Calu3 (cell line): ENCODE measurements at regions of chr22 and their contacts with region 1.

Region 1: DNA sequence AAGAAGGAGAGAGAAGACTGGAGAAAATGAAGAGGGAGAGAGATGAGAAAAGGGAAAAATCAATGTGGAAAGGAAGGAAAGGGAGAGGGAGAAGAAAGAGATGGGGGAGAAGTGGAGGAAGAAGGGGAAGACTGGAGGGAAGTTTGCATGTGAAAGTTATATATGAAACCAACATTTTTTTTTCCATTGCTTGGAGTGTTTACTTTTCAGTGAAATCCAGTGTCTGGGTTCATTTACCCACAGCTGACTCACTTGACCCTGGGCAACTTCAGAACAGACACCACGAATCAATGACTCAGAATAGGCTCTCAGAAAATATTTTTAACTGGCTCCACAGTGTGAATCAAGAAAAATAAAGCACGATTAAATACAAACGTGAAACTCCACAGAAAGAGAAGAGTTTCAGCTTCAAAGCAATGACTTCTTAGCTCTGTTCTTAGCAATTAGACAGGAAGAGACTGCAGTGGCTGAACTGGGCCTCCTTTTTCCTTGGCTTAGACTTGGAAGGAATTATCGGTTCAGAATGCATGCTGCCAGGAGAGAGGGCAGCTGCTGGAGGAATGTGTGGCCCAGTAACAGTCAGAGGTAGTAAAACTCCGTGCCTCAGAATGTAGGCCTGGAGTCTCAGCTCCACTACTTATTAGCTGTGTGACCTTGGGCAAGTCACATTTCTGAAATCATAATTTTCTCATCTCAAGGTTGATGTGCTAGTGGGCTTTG is 237.5 kb downstream of the MIAT start:
- DNase-seq: peak; percentile 44
- H3K4me3 Mint-ChIP-seq: peak overlapping the region; percentile 13
- H3K27ac Mint-ChIP-seq: peak overlapping the region; percentile 55
- H3K4me1 Mint-ChIP-seq: peaks cover 45% of the 10 kb centered on the region
- H3K27me3 Mint-ChIP-seq: peaks cover 17% of the 10 kb centered on the region
- CTCF ChIP-seq: no peak

Region 2: DNA sequence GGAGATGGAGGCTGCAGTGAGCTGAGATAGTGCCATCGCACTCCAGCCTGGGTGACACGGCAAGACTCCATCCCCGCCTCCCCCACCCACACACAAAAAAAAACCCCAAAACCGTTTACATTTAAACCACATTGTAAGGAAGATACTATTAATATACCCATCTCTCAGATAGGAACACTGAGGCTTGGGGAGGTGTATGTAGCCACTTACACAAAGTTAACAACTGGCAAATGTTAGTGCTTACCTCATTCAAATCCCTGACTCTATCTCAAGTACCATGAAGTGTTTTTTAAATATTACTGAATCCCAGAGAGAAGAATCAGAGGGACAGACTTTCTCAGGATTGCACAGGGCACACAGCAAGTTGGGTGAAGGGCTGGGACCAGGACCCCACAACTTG is 73.1 kb before region 1 on chr22:
- CTCF ChIA-PET with region 1: no interaction called
- intact Hi-C with region 1: loop called (anchors 2 kb)
- DNase-seq: no peak
- H3K4me3 Mint-ChIP-seq: no peak overlapping the region
- H3K27ac Mint-ChIP-seq: no peak overlapping the region
- H3K4me1 Mint-ChIP-seq: no peaks in the 10 kb centered on the region
- H3K27me3 Mint-ChIP-seq: peaks cover 35% of the 10 kb centered on the region
- CTCF ChIP-seq: no peak

Region 3: GRCh38 chr22:26949193-26949592 is 54.3 kb after region 1 on chr22:
- CTCF ChIA-PET with region 1: no interaction called
- intact Hi-C with region 1: no loop called
- DNase-seq: peak; percentile 32
- H3K4me3 Mint-ChIP-seq: no peak overlapping the region
- H3K27ac Mint-ChIP-seq: no peak overlapping the region
- H3K4me1 Mint-ChIP-seq: no peaks in the 10 kb centered on the region
- H3K27me3 Mint-ChIP-seq: peaks cover 41% of the 10 kb centered on the region
- CTCF ChIP-seq: no peak

Region 4: GRCh38 chr22:27113211-27113635 is 218.3 kb after region 1 on chr22:
- CTCF ChIA-PET with region 1: no interaction called
- intact Hi-C with region 1: loop called (anchors 5 kb)
- DNase-seq: peak; percentile 87
- H3K4me3 Mint-ChIP-seq: peak overlapping the region; percentile 41
- H3K27ac Mint-ChIP-seq: peak overlapping the region; percentile 99
- H3K4me1 Mint-ChIP-seq: peaks cover 82% of the 10 kb centered on the region
- H3K27me3 Mint-ChIP-seq: no peaks in the 10 kb centered on the region
- CTCF ChIP-seq: no peak

Region 5: GRCh38 chr22:27195094-27195493 is 300.2 kb after region 1 on chr22:
- CTCF ChIA-PET with region 1: no interaction called
- intact Hi-C with region 1: loop called (anchors 5 kb)
- DNase-seq: no peak
- H3K4me3 Mint-ChIP-seq: no peak overlapping the region
- H3K27ac Mint-ChIP-seq: no peak overlapping the region
- H3K4me1 Mint-ChIP-seq: peaks cover 11% of the 10 kb centered on the region
- H3K27me3 Mint-ChIP-seq: no peaks in the 10 kb centered on the region
- CTCF ChIP-seq: no peak